GM12878 (cell line): ENCODE measurements at regions of chr11 and their contacts with region 1.

Region 1: GRCh38 chr11:102341844-102342318 is 5.1 kb upstream of the BIRC2 start:
- DNase-seq: peak; percentile 76
- ATAC-seq: peak; percentile 67
- H3K4me3 ChIP-seq: no peak overlapping the region
- H3K27ac ChIP-seq: no peak overlapping the region
- H3K4me1 ChIP-seq: no peaks in the 10 kb centered on the region
- H3K27me3 ChIP-seq: no peaks in the 10 kb centered on the region
- CTCF ChIP-seq: peak; percentile 78 to 84 (median 79)
- EP300 ChIP-seq: no peak
- POLR2A ChIP-seq: no peak
- RAD21 ChIP-seq: peak; percentile 94

Region 2: DNA sequence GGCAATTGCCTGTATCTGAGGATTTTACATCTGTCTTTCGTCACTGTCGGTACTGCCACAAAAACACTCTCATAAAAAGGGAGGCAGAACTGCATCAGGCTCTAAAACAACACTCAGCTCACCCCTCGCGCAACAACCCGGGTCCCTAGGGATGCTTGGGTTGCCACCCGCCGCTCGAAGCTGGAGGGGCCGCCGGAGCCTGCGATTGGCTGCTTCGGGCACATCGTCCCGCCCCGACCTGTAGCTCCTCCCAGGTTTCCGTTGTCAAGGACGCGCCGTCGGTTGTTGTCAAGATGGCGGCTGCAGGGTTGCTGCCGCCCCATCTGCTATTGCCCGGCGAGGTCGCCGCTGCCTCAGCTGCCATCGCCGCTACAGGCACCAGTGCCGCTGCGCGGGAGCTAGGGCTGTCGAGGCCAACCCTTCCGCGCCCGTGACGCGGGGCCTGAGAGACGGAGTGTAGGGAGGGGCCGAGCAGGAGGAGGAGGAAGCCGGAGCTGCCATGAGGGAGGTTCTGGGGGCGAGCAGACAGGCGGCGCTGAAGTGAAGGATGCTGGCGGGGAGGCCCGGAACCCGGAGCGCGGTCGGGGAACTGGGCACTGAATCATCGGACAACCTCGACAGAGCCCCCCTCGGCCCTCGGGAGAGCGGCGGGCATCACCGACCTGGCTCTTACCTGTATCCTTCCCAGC is 427.0 kb before region 1 on chr11 and contains the start of gene CEP126:
- CTCF ChIA-PET with region 1: no interaction called
- POLR2A ChIA-PET with region 1: no interaction called
- RAD21 ChIA-PET with region 1: no interaction called
- SMC1A ChIA-PET with region 1: no interaction called
- in situ Hi-C with region 1: no loop called
- intact Hi-C with region 1: no loop called
- DNase-seq: peak; percentile 32
- ATAC-seq: peak; percentile 99
- H3K4me3 ChIP-seq: peak within 1 kb of the TSS; percentile 68
- H3K27ac ChIP-seq: no peak within 1 kb of the TSS
- H3K4me1 ChIP-seq: 0 out of 2 replicates have a peak, but pooled peaks cover 3% of the 10 kb centered on the region
- H3K27me3 ChIP-seq: no peaks in the 10 kb centered on the region
- CTCF ChIP-seq: peak in 2 of 3 experiments; percentile 5 to 11; a peak in 1 of 6 replicates
- EP300 ChIP-seq: no peak
- POLR2A ChIP-seq: no peak
- RAD21 ChIP-seq: no peak
- polyA plus RNA-seq, gene CEP126: not detected

Region 3: DNA sequence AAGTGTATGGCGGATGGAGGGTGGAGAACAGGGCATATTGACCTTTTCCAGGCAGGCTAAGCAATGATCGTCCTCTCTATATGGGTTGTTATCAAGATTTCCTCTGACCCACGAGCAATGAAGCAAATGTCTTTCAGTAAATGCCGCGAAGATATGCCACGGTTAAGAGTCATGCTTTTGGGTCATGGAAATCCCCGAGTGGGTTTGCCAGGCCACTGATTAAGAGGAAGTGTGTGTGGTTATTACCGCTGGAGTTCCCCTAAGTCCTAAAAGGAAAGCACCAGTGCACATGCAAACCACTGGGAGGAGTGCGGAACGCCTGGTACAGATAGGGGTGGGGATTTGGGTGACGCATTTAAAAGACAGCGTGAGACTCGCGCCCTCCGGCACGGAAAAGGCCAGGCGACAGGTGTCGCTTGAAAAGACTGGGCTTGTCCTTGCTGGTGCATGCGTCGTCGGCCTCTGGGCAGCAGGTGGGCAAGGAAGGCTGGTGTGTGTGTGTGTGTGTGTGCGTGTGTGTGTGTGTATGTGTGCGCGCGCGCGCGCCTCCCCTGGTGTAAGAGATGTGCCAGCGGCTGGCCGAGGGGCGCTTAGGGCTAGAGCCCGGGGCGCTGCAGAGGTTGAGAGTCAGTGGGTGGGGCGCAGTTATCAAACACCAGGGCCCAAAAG is 24.6 kb before region 1 on chr11 and contains the start of gene BIRC3:
- CTCF ChIA-PET with region 1: interaction called, 27 read pairs
- POLR2A ChIA-PET with region 1: interaction called, 4 read pairs
- RAD21 ChIA-PET with region 1: interaction called, 10 read pairs
- SMC1A ChIA-PET with region 1: interaction called, 22 read pairs
- in situ Hi-C with region 1: no loop called
- intact Hi-C with region 1: loop called (anchors 1 kb)
- DNase-seq: peak; percentile 100
- ATAC-seq: peak; percentile 75
- H3K4me3 ChIP-seq: peak within 1 kb of the TSS; percentile 76
- H3K27ac ChIP-seq: peak within 1 kb of the TSS; percentile 97
- H3K4me1 ChIP-seq: peaks cover 24% of the 10 kb centered on the region
- H3K27me3 ChIP-seq: no peaks in the 10 kb centered on the region
- CTCF ChIP-seq: peak in 2 of 3 experiments; percentile 14 to 20; a peak in 2 of 6 replicates
- EP300 ChIP-seq: peak; percentile 99
- POLR2A ChIP-seq: peak; percentile 99
- RAD21 ChIP-seq: no peak
- polyA plus RNA-seq, gene BIRC3: 63.8 to 92.9 TPM

Region 4: DNA sequence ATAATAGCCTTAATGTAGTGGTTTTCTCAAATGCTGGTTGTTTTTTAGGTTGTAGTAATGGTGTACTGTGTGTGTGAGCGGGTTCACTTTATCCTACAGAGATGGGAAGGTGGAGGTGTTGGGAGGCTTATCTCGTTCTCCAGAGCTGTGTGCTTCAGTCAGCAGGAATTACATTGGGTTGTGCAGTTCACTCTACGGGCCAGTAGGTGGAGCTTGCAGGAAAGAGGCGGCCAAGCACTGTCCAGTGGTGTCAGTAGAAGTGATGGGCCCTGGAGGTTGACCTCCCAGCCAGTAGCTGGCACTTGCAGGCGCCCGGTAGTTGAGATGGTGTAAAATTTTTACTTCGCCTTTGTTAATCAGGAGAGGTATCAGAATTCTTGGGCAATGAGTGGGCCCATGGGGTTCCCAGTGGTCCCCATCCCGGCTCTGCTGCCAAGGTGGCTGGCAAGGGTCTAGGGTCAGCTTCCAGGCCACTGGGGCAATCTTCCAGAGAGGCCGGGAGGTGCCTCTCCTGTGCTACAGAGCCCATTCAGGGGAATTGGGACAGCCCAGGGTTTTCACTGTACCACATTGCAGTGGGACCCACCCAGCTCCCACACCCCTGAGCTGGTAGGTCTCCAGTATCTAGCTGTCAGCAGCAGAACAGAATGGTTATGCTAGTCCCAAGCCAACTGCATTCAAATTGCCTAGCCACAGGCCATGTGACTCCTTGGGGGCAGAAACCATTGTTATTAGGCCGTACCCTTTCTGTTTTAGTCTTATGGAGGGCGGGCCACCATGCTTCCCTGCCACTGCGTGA is 49.0 kb after region 1 on chr11:
- CTCF ChIA-PET with region 1: interaction called, 64 read pairs
- POLR2A ChIA-PET with region 1: no interaction called
- RAD21 ChIA-PET with region 1: interaction called, 20 read pairs
- SMC1A ChIA-PET with region 1: interaction called, 37 read pairs
- in situ Hi-C with region 1: no loop called
- intact Hi-C with region 1: loop called (anchors 2 kb)
- DNase-seq: no peak
- ATAC-seq: peak; percentile 93
- H3K4me3 ChIP-seq: no peak overlapping the region
- H3K27ac ChIP-seq: no peak overlapping the region
- H3K4me1 ChIP-seq: no peaks in the 10 kb centered on the region; the same call in 1 of the 2 replicates
- H3K27me3 ChIP-seq: no peaks in the 10 kb centered on the region
- CTCF ChIP-seq: peak; percentile 82 to 91 (median 89)
- EP300 ChIP-seq: no peak
- POLR2A ChIP-seq: no peak
- RAD21 ChIP-seq: peak; percentile 76

Region 5: DNA sequence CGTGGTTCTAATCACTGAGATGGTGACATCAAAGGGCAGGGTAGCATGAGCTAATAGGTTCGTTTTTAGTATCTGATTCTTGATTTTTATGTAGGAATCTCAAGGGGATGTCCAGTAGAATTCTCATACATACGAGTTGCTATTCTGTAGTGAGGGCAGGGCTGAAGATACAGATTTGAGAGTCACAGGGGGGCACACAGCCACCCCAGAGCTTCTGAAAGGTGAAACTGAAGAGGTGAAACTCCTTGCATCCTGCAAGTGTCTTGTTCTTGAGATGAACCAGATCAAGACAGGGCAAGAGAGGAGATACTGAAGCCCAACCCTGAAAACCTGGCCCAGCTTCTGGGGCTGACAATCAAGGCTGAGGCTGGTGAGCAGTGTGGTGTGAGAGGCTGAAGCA is 146.3 kb after region 1 on chr11:
- CTCF ChIA-PET with region 1: interaction called, 19 read pairs
- POLR2A ChIA-PET with region 1: no interaction called
- RAD21 ChIA-PET with region 1: interaction called, 16 read pairs
- SMC1A ChIA-PET with region 1: interaction called, 26 read pairs
- in situ Hi-C with region 1: no loop called
- intact Hi-C with region 1: no loop called
- DNase-seq: no peak
- ATAC-seq: peak; percentile 86
- H3K4me3 ChIP-seq: no peak overlapping the region
- H3K27ac ChIP-seq: no peak overlapping the region
- H3K4me1 ChIP-seq: peaks cover 18% of the 10 kb centered on the region
- H3K27me3 ChIP-seq: 0 out of 4 replicates have a peak, but pooled peaks cover 0 to 3% of the 10 kb centered on the region in 2 experiments
- CTCF ChIP-seq: no peak
- EP300 ChIP-seq: no peak
- POLR2A ChIP-seq: no peak
- RAD21 ChIP-seq: no peak

Region 6: DNA sequence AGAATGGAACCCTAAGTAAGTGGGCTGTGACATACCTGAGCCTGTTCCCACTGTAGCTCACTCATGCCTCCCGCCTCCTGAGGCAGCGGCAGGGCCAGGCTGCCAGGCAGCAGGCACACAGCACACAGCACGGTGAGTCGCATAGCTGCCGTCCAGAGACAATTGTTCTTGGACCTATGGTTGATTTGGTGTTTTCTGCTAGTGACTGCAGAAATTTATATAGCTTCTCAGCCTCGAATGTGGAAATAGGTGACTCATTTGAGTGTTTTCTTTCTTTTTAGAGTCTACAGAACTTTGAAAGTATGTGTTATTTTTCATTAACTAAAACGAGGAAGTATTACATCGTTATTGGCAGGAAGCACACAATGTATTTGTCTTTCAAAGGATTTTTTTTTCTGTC is 188.7 kb after region 1 on chr11 and contains the start of gene MMP7:
- CTCF ChIA-PET with region 1: interaction called, 10 read pairs
- POLR2A ChIA-PET with region 1: no interaction called
- RAD21 ChIA-PET with region 1: interaction called, 4 read pairs
- SMC1A ChIA-PET with region 1: interaction called, 3 read pairs
- in situ Hi-C with region 1: no loop called
- intact Hi-C with region 1: no loop called
- DNase-seq: no peak
- ATAC-seq: peak; percentile 71
- H3K4me3 ChIP-seq: no peak within 1 kb of the TSS
- H3K27ac ChIP-seq: no peak within 1 kb of the TSS
- H3K4me1 ChIP-seq: no peaks in the 10 kb centered on the region
- H3K27me3 ChIP-seq: no peaks in the 10 kb centered on the region
- CTCF ChIP-seq: no peak
- EP300 ChIP-seq: 0 out of 4 replicates have a peak, but pooled peaks of 1 of the 2 experiments have one; percentile 9
- POLR2A ChIP-seq: no peak
- RAD21 ChIP-seq: no peak
- polyA plus RNA-seq, gene MMP7: 1.6 to 1.7 TPM

Region 7: GRCh38 chr11:102573851-102574250 is 232.0 kb after region 1 on chr11:
- CTCF ChIA-PET with region 1: no interaction called
- POLR2A ChIA-PET with region 1: no interaction called
- RAD21 ChIA-PET with region 1: no interaction called
- SMC1A ChIA-PET with region 1: no interaction called
- in situ Hi-C with region 1: no loop called
- intact Hi-C with region 1: no loop called
- DNase-seq: no peak
- ATAC-seq: no peak
- H3K4me3 ChIP-seq: no peak overlapping the region
- H3K27ac ChIP-seq: no peak overlapping the region
- H3K4me1 ChIP-seq: 0 out of 2 replicates have a peak, but pooled peaks cover 4% of the 10 kb centered on the region
- H3K27me3 ChIP-seq: no peaks in the 10 kb centered on the region
- CTCF ChIP-seq: no peak
- EP300 ChIP-seq: no peak
- POLR2A ChIP-seq: no peak
- RAD21 ChIP-seq: no peak

Region 8: DNA sequence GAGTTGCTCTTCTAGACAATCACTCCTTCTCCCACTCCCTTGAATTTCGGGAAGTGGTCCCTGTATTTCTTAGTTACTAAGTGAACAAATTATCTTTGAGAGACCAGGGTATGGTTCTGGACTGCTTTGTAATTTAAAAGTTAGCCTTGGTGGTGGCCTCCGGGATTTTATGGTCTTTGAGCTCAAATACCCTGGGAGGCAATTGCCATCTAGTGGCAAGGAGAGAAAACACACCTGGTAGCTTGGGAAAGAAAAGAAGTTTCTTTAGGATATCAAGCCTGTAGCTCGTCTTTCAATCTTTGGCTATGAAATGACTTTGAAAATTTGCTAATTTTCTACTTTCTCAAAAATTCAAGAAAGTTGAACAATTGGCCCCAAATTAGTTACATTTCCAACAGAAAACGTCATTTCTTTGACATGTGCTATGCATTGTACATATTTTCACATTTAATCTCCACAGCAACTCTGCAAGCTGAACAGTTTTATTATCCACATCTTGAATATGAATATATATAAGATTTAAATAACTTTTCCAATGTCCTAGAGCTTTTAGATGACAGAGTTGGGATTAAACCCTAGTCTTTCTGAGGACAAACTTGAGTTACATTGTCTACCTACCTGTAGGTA is 324.6 kb after region 1 on chr11:
- CTCF ChIA-PET with region 1: interaction called, 131 read pairs
- POLR2A ChIA-PET with region 1: interaction called, 3 read pairs
- RAD21 ChIA-PET with region 1: interaction called, 80 read pairs
- SMC1A ChIA-PET with region 1: interaction called, 86 read pairs
- in situ Hi-C with region 1: no loop called
- intact Hi-C with region 1: loop called (anchors 1 kb)
- DNase-seq: no peak
- ATAC-seq: peak; percentile 76
- H3K4me3 ChIP-seq: no peak overlapping the region
- H3K27ac ChIP-seq: no peak overlapping the region
- H3K4me1 ChIP-seq: no peaks in the 10 kb centered on the region
- H3K27me3 ChIP-seq: peaks cover 0 to 3% of the 10 kb centered on the region in 2 experiments; a peak in 1 of 4 replicates
- CTCF ChIP-seq: peak; percentile 81 to 87 (median 82)
- EP300 ChIP-seq: no peak
- POLR2A ChIP-seq: no peak
- RAD21 ChIP-seq: peak; percentile 97